Esophagus muscularis mucosa (tissue), 4 donors: ENCODE measurements at regions of chr10 and their contacts with region 1.

Region 1: DNA sequence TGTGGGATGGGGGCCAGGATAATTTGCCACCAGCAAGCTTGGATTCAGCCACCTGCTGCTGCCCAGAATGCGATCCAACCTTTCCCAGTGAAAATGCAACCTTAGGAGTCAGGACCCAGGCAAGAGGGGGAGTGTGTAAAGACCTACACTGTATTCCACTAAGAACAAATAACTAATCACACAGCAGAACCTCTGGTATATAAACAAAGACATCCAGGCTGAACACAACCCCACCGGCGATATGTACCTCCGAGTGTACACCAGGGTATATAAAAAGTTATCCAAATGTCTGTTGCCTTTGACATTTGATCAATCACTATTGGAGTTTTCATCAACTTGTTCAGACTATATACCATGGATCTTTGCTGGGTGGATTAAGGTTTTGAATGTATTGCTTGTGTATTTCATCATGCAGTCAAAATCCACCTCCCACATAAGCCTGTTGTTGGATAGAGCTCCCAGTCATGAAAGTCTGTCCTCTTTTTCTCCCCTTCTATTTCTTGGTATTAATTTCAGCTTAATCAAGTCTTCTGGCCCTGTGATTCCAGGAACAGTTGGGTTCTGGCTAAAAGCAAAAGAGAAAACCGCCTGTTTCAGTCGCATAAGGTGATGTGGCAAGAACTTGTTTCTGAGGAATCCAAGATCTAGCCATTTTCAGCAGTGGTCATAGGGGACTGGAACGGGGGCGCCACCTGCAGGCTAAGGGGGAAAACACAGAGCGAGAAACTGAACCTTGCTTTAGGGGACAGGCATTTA is 290.7 kb downstream of the CCDC3 start:
- DNase-seq: peak; percentile 96
- H3K4me3 ChIP-seq: no peak overlapping the region
- H3K27ac ChIP-seq: peak overlapping the region; percentile 80 to 85 (median 82)
- H3K4me1 ChIP-seq: peaks cover 37 to 59% (median 58%) of the 10 kb centered on the region in 4 donors
- H3K27me3 ChIP-seq: no peaks in the 10 kb centered on the region
- CTCF ChIP-seq: peak; percentile 92 to 97 (median 93)
- EP300 ChIP-seq: no peak
- POLR2A ChIP-seq: no peak

Region 2: DNA sequence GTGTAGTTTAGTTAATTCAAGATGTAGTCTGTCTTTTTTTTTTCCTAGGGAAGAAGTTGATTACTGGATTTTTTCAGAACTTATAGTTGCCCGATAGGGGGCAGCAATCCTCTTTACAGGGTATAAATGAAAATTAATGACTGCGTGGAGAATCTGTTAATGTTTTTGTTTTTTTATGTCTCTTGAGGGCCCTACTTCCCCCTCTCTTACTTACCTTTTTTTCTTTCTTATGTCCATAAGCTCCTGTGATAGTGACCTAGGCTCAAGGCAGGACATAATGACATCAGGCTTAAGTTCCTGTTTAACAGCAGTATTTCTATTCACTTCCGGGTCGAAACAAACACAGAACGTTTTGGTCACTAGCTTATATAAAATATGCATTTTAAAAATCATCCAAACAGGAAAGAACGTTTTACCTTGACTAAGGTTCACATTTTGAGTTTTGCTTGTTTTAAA is 496.0 kb before region 1 on chr10:
- intact Hi-C with region 1: loop called (anchors 5 kb)
- DNase-seq: no peak
- H3K4me3 ChIP-seq: peak overlapping the region; percentile 20 to 37 (median 36)
- H3K27ac ChIP-seq: peak overlapping the region; percentile 63 to 73 (median 68)
- H3K4me1 ChIP-seq: peaks cover 7 to 46% (median 39%) of the 10 kb centered on the region in 4 donors
- H3K27me3 ChIP-seq: no peaks in the 10 kb centered on the region
- CTCF ChIP-seq: peak; percentile 63 to 73 (median 73)
- EP300 ChIP-seq: no peak
- POLR2A ChIP-seq: no peak

Region 3: GRCh38 chr10:12902135-12902572 is 191.4 kb after region 1 on chr10:
- intact Hi-C with region 1: loop called (anchors 2 kb)
- DNase-seq: no peak
- H3K4me3 ChIP-seq: no peak overlapping the region
- H3K27ac ChIP-seq: no peak overlapping the region
- H3K4me1 ChIP-seq: peaks cover 0 to 17% (median 11%) of the 10 kb centered on the region in 4 donors
- H3K27me3 ChIP-seq: no peaks in the 10 kb centered on the region
- CTCF ChIP-seq: peak; percentile 71 to 84 (median 79)
- EP300 ChIP-seq: no peak
- POLR2A ChIP-seq: no peak